ENCODE measurements at regions of chr12 and their contacts with region 1.

Region 1: GRCh38 chr12:113732916-113733315 is 233.2 kb downstream of the RBM19 start:
- DNase-seq: no peak
- H3K4me3 ChIP-seq: no peak overlapping the region
- H3K27ac ChIP-seq: no peak overlapping the region
- H3K4me1 ChIP-seq: no peaks in the 10 kb centered on the region
- CTCF ChIP-seq: no peak

Region 2: GRCh38 chr12:113439606-113440030 is 293.3 kb before region 1 on chr12:
- CTCF ChIA-PET with region 1: no interaction called
- POLR2A ChIA-PET with region 1: no interaction called
- intact Hi-C with region 1: loop called (anchors 5 kb)
- DNase-seq: peak; percentile 59
- H3K4me3 ChIP-seq: no peak overlapping the region
- H3K27ac ChIP-seq: no peak overlapping the region
- H3K4me1 ChIP-seq: no peaks in the 10 kb centered on the region
- CTCF ChIP-seq: peak; percentile 91

Region 3: GRCh38 chr12:113689047-113689610 is 43.8 kb before region 1 on chr12:
- CTCF ChIA-PET with region 1: no interaction called
- POLR2A ChIA-PET with region 1: no interaction called
- intact Hi-C with region 1: no loop called
- DNase-seq: no peak
- H3K4me3 ChIP-seq: no peak overlapping the region
- H3K27ac ChIP-seq: no peak overlapping the region
- H3K4me1 ChIP-seq: no peaks in the 10 kb centered on the region
- CTCF ChIP-seq: no peak

Region 4: DNA sequence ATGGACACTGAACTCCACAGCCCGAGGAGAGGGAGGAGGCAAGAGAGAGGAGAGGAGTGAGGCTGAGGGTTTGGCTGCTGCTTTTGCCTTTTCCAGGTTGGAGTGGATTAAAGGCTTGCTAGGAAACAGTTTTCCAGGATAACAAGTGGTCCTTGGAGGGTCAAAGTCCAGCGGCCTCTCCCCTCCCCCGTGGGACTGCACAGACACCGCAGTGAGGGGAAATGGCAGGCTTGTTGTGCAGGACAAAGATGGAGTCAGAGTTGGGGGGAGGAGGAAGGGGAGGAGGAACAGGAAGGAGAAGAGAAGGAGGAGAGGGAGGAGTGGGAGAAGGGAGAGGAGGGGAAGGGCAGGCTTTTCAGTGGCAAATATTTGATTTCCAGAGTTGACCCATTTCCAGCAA is 12.3 kb before region 1 on chr12:
- CTCF ChIA-PET with region 1: no interaction called
- POLR2A ChIA-PET with region 1: no interaction called
- intact Hi-C with region 1: no loop called
- DNase-seq: no peak
- H3K4me3 ChIP-seq: no peak overlapping the region
- H3K27ac ChIP-seq: no peak overlapping the region
- H3K4me1 ChIP-seq: no peaks in the 10 kb centered on the region
- CTCF ChIP-seq: no peak